Endothelial cell of umbilical vein (primary cell): ENCODE measurements at regions of chr7 and their contacts with region 1.

Region 1: GRCh38 chr7:142603870-142604448 is 145.3 kb upstream of the PRSS1 start:
- DNase-seq: peak; percentile 71
- H3K4me3 ChIP-seq: peak overlapping the region in 2 of 3 experiments; percentile 45 to 68
- H3K27ac ChIP-seq: no peak overlapping the region
- H3K4me1 ChIP-seq: peaks cover 7% of the 10 kb centered on the region
- H3K27me3 ChIP-seq: no peaks in the 10 kb centered on the region
- CTCF ChIP-seq: peak; percentile 67 to 75
- POLR2A ChIP-seq: no peak

Region 2: GRCh38 chr7:142557971-142558582 is 45.9 kb before region 1 on chr7:
- CTCF ChIA-PET with region 1: interaction called, 28 read pairs
- POLR2A ChIA-PET with region 1: no interaction called
- dilution Hi-C with region 1: no loop called
- intact Hi-C with region 1: loop called (anchors 2 kb)
- DNase-seq: peak; percentile 48
- H3K4me3 ChIP-seq: no peak overlapping the region
- H3K27ac ChIP-seq: peak overlapping the region; percentile 70
- H3K4me1 ChIP-seq: peaks cover 40% of the 10 kb centered on the region
- H3K27me3 ChIP-seq: no peaks in the 10 kb centered on the region
- CTCF ChIP-seq: peak; percentile 62 to 89
- POLR2A ChIP-seq: no peak

Region 3: DNA sequence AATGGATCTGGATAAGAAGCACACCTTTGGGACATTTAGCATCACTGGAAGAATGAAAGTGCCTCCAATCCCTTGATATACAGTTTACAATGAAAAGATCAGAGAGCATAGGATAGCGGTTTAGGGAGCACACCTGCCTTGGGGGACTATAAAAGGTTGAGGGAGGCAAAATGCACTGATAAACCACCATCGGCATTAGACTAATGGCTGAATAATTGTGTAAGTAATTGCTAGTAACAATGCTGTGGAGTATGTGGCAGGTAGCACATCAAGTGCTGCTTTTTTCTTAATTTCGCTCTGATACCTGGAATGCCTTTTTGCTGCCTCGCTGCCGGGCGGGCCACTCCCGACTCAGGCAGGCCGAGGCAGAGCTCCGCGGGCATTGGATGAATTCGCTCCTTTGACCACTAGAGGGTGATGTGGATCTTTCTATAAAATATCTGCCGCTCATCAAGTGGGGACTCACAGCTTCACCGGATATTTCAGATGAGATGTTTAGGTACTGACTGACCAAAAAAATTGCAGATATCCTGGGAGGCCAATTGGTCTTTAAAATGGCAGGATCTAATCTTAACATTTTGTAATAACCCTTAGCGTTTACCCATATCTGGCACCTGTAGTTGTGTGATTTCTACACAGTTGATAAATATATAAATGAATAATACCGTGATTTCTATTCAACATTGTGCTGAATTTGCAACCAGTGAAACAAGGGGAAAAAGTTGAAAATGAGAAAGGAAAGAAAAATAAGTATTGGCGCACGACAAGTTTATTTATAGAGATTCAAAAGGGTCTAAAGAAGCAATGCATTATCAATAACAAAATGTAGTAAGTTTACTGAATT is 28.6 kb after region 1 on chr7:
- CTCF ChIA-PET with region 1: interaction called, 48 read pairs
- POLR2A ChIA-PET with region 1: no interaction called
- dilution Hi-C with region 1: no loop called
- intact Hi-C with region 1: loop called (anchors 1 kb)
- DNase-seq: peak; percentile 74
- H3K4me3 ChIP-seq: no peak overlapping the region
- H3K27ac ChIP-seq: no peak overlapping the region
- H3K4me1 ChIP-seq: no peaks in the 10 kb centered on the region
- H3K27me3 ChIP-seq: peaks cover 1 to 3% of the 10 kb centered on the region in 2 experiments
- CTCF ChIP-seq: peak; percentile 69 to 73
- POLR2A ChIP-seq: no peak

Region 4: DNA sequence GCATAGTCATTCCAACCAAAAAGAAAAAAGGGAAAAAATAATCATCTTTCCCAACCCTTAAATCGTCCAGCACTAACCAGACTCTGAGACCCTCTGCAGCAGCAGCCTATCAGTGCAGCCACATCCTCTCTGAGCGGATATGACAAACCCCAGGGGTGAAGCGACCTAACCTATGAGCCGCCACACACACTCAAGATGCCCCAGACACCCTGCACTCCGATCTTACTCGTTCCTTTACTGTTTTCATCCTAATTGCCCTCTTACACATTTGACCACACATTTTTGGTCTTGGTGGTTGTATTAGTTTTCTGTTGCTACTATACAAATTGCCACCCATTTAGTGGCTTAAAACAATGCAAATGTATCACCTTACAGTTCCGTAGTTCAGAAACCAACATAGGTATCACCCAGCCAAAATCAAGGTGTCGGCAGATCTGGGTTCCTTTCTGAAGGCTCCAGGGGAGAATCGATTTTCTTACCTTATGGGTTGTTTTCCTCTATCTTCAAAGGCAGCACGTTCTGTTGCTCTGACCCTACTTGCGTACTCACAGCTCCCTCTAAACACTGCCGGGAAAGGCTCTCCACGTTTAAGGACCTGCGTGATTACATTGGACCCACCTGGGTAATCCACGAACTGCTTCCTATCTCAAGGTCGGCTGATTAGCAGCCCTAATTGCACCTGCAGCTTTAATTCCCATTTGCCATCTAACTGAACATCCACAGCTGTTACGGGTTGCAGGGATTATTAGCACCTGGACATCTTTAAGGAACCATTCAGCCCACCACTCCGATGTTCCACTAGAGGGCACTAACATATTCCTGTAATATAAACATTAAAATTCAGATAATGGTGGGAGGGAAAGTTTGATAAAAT is 108.0 kb after region 1 on chr7:
- CTCF ChIA-PET with region 1: interaction called, 12 read pairs
- POLR2A ChIA-PET with region 1: no interaction called
- dilution Hi-C with region 1: no loop called
- intact Hi-C with region 1: loop called (anchors 1 kb)
- DNase-seq: peak; percentile 44
- H3K4me3 ChIP-seq: no peak overlapping the region
- H3K27ac ChIP-seq: no peak overlapping the region
- H3K4me1 ChIP-seq: peaks cover 20% of the 10 kb centered on the region
- H3K27me3 ChIP-seq: peaks cover 7 to 16% of the 10 kb centered on the region in 2 experiments
- CTCF ChIP-seq: peak; percentile 52 to 69
- POLR2A ChIP-seq: no peak

Region 5: DNA sequence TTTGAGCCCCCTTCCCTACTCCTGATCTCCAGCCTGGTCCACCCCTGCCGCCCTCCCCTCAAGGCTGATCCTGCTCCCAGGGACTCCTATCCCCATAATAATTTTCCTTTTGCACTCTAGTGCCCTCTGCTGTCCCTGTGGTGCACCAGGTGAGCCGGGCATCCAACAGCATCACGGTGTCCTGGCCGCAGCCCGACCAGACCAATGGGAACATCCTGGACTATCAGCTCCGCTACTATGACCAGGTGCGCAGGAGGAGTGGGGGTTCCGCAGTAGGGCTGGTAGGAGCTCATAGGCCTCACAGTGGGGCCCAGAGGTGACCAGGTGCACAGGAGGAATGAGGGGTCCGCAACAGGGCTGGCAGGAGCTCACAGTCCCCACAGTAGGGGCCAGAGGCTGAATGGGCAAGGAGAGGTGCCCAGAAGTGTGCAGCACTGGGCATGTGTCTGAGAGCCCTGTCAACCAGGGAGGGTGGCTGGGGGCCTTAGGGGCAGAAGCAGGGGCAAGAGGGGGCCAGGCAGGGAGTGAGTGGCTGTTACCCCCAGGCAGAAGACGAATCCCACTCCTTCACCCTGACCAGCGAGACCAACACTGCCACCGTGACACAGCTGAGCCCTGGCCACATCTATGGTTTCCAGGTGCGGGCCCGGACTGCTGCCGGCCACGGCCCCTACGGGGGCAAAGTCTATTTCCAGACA is 262.6 kb after region 1 on chr7:
- CTCF ChIA-PET with region 1: interaction called, 13 read pairs
- POLR2A ChIA-PET with region 1: no interaction called
- dilution Hi-C with region 1: no loop called
- intact Hi-C with region 1: loop called (anchors 1 kb)
- DNase-seq: peak; percentile 29
- H3K4me3 ChIP-seq: no peak overlapping the region
- H3K27ac ChIP-seq: no peak overlapping the region
- H3K4me1 ChIP-seq: no peaks in the 10 kb centered on the region
- H3K27me3 ChIP-seq: no peaks in the 10 kb centered on the region
- CTCF ChIP-seq: peak; percentile 39 to 64
- POLR2A ChIP-seq: no peak